CD4-positive, alpha-beta T cell (primary cell): ENCODE measurements at regions of chr17 and their contacts with region 1.

Region 1: DNA sequence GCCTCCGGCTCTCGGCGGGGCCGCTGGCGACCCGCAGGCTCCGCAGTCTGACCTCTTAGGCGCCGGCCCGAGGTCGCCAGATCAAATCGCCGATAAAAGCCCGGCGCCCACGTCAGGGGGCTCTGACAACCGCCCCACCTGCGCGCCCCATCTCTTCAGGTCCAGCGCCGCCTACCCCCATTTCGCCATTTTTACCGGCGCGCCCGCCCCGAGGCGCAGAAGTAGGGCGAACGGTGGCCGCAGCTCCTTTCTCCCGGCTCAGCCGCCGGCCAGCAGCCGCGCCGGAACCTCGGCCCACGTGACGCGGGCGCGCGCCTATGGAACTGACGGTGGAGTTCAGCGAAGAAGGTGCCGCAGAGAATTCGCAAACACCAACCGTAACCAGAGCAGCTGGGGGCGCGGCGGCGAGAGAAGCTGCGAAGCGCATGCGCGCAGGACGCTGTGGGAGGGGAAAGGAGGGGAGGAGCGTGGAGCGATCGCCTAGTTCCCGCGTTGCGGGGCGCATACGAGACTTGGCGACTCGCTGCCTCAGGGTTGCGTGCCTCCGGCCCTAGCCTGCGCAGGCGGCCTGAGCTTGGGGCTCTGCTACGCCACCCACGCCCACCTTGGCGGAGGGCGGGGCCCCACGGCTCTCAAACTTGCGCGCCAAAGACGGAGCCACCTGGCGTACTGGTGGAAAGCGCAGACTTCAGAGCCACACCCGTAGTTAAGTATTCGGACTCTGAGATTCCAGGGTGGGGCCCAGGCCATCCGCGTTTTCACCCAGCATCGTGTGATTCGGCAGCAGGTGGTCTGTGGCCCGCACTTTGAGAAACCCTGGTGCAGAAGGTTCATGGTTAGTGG is at the start of gene TRIM37:
- DNase-seq: peak; percentile 97 to 100 (median 98)
- ATAC-seq: peak; percentile 94
- H3K4me3 ChIP-seq: peak within 1 kb of the TSS; percentile 95
- H3K4me3 Mint-ChIP-seq: peak within 1 kb of the TSS; percentile 93
- H3K27ac ChIP-seq: peak within 1 kb of the TSS; percentile 91
- H3K27ac Mint-ChIP-seq: peak within 1 kb of the TSS; percentile 88
- H3K4me1 ChIP-seq: peaks cover 13% of the 10 kb centered on the region
- H3K4me1 Mint-ChIP-seq: peaks cover 41% of the 10 kb centered on the region
- H3K27me3 ChIP-seq: no peaks in the 10 kb centered on the region
- H3K27me3 Mint-ChIP-seq: no peaks in the 10 kb centered on the region
- CTCF ChIP-seq: no peak
- total RNA-seq, gene TRIM37: 16.8 to 18.0 TPM

Region 2: DNA sequence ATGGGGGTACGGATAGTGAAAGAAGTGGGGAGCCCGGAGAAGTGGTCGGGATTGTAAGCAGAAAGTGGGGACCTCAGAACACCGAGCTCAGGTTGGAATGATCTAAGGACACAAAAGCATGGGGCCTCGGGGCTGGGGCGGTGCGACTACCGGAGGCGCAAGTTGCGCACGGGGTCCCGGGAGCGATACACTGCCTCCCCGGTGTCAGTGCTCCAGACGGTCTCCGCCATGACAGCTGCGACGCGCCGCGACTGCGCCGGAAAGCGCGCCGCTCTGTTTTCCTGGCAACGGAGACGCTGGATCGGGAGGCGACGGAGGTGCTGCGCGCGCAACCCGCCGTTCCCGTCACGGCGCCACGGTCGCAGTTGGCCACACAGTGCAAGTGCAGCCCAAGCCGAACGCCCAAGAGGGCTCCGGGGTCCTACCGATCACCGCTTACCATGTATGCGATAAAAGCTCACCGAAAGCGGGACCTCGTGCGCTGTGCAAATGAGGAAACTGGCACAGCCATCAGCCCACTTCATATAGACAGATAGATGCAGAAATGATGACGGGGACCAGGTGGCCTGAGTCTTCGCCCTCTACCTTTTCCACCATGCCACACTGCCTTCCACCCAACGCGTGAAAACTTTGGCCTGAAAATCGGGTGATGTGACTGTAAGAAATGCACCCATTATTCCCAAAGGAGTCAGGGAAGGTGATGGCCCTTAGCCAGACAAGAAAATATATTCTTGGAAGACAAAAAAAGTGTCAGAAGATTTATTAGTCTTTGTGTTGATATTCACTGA is 887.5 kb before region 1 on chr17 and contains the start of gene MKS1:
- CTCF ChIA-PET with region 1: no interaction called
- POLR2A ChIA-PET with region 1: interaction called, 3 read pairs
- intact Hi-C with region 1: loop called in 1 of 2 experiments (anchors 5 kb)
- DNase-seq: peak; percentile 92 to 97 (median 95)
- ATAC-seq: peak; percentile 97
- H3K4me3 ChIP-seq: peak within 1 kb of the TSS; percentile 88
- H3K4me3 Mint-ChIP-seq: peak within 1 kb of the TSS; percentile 90
- H3K27ac ChIP-seq: peak within 1 kb of the TSS; percentile 62 to 79
- H3K27ac Mint-ChIP-seq: peak within 1 kb of the TSS; percentile 90
- H3K4me1 ChIP-seq: peaks cover 16% of the 10 kb centered on the region
- H3K4me1 Mint-ChIP-seq: peaks cover 25% of the 10 kb centered on the region
- H3K27me3 ChIP-seq: no peaks in the 10 kb centered on the region
- H3K27me3 Mint-ChIP-seq: no peaks in the 10 kb centered on the region
- CTCF ChIP-seq: peak; percentile 78
- total RNA-seq, gene MKS1: 4.6 to 6.4 TPM

Region 3: GRCh38 chr17:58631523-58632323 is 475.0 kb before region 1 on chr17:
- CTCF ChIA-PET with region 1: no interaction called
- POLR2A ChIA-PET with region 1: interaction called, 7 read pairs
- intact Hi-C with region 1: loop called in 1 of 2 experiments (anchors 5 kb)
- DNase-seq: peak; percentile 85 to 97 (median 90)
- ATAC-seq: peak; percentile 89
- H3K4me3 ChIP-seq: peak overlapping the region; percentile 54
- H3K4me3 Mint-ChIP-seq: no peak overlapping the region
- H3K27ac ChIP-seq: peak overlapping the region; percentile 66 to 94
- H3K27ac Mint-ChIP-seq: no peak overlapping the region
- H3K4me1 ChIP-seq: peaks cover 10% of the 10 kb centered on the region
- H3K4me1 Mint-ChIP-seq: no peaks in the 10 kb centered on the region
- H3K27me3 ChIP-seq: no peaks in the 10 kb centered on the region
- H3K27me3 Mint-ChIP-seq: no peaks in the 10 kb centered on the region
- CTCF ChIP-seq: no peak

Region 4: GRCh38 chr17:59004338-59005111 is 102.2 kb before region 1 on chr17:
- CTCF ChIA-PET with region 1: no interaction called
- POLR2A ChIA-PET with region 1: interaction called, 3 read pairs
- intact Hi-C with region 1: loop called in 1 of 2 experiments (anchors 5 kb)
- DNase-seq: peak; percentile 49 to 84 (median 66)
- ATAC-seq: peak; percentile 57
- H3K4me3 ChIP-seq: no peak overlapping the region
- H3K4me3 Mint-ChIP-seq: peak overlapping the region; percentile 45
- H3K27ac ChIP-seq: no peak overlapping the region
- H3K27ac Mint-ChIP-seq: peak overlapping the region; percentile 81
- H3K4me1 ChIP-seq: peaks cover 9% of the 10 kb centered on the region
- H3K4me1 Mint-ChIP-seq: peaks cover 12% of the 10 kb centered on the region
- H3K27me3 ChIP-seq: no peaks in the 10 kb centered on the region
- H3K27me3 Mint-ChIP-seq: no peaks in the 10 kb centered on the region
- CTCF ChIP-seq: peak; percentile 95

Region 5: DNA sequence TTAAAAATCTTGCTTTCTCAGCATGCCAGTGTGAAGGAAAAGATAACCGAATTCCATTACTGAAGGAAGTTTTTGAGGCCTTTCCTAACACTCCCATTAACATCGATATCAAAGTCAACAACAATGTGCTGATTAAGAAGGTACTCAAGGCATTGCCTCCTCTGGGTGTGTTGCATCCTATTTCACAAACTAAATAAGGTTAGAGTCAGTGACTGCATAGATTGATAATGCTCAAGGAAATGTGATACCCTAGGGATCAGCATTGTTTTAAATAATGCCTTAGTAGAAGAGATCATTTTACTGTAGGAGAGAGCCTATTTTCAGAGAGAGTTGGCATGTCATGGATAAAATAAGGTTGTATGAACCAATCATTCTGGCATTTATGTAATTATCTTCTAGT is 150.4 kb after region 1 on chr17:
- CTCF ChIA-PET with region 1: no interaction called
- POLR2A ChIA-PET with region 1: no interaction called
- intact Hi-C with region 1: no loop called
- DNase-seq: no peak
- ATAC-seq: no peak
- H3K4me3 ChIP-seq: no peak overlapping the region
- H3K4me3 Mint-ChIP-seq: no peak overlapping the region
- H3K27ac ChIP-seq: no peak overlapping the region
- H3K27ac Mint-ChIP-seq: no peak overlapping the region
- H3K4me1 ChIP-seq: no peaks in the 10 kb centered on the region
- H3K4me1 Mint-ChIP-seq: no peaks in the 10 kb centered on the region
- H3K27me3 ChIP-seq: no peaks in the 10 kb centered on the region
- H3K27me3 Mint-ChIP-seq: no peaks in the 10 kb centered on the region
- CTCF ChIP-seq: no peak

Region 6: GRCh38 chr17:59565171-59565969 is 458.7 kb after region 1 on chr17 and contains the start of gene DHX40:
- CTCF ChIA-PET with region 1: no interaction called
- POLR2A ChIA-PET with region 1: interaction called, 5 read pairs
- intact Hi-C with region 1: loop called in 1 of 2 experiments (anchors 5 kb)
- DNase-seq: peak; percentile 86 to 99 (median 92)
- ATAC-seq: peak; percentile 87
- H3K4me3 ChIP-seq: peak within 1 kb of the TSS; percentile 90
- H3K4me3 Mint-ChIP-seq: peak within 1 kb of the TSS; percentile 100
- H3K27ac ChIP-seq: peak within 1 kb of the TSS; percentile 86 to 91
- H3K27ac Mint-ChIP-seq: peak within 1 kb of the TSS; percentile 97
- H3K4me1 ChIP-seq: peaks cover 13% of the 10 kb centered on the region
- H3K4me1 Mint-ChIP-seq: peaks cover 26% of the 10 kb centered on the region
- H3K27me3 ChIP-seq: no peaks in the 10 kb centered on the region
- H3K27me3 Mint-ChIP-seq: no peaks in the 10 kb centered on the region
- CTCF ChIP-seq: no peak
- total RNA-seq, gene DHX40: 62.6 to 65.6 TPM

Region 7: GRCh38 chr17:59892924-59893676 is 786.4 kb after region 1 on chr17 and contains the starts of genes RPS6KB1 and TUBD1:
- CTCF ChIA-PET with region 1: no interaction called
- POLR2A ChIA-PET with region 1: interaction called, 3 read pairs
- intact Hi-C with region 1: loop called in 1 of 2 experiments (anchors 5 kb)
- DNase-seq: peak; percentile 94 to 100 (median 97)
- ATAC-seq: peak; percentile 91
- H3K4me3 ChIP-seq: peak within 1 kb of the TSS; percentile 79
- H3K4me3 Mint-ChIP-seq: peak within 1 kb of the TSS; percentile 98
- H3K27ac ChIP-seq: peak within 1 kb of the TSS; percentile 88 to 94
- H3K27ac Mint-ChIP-seq: peak within 1 kb of the TSS; percentile 94
- H3K4me1 ChIP-seq: peaks cover 44% of the 10 kb centered on the region
- H3K4me1 Mint-ChIP-seq: peaks cover 65% of the 10 kb centered on the region
- H3K27me3 ChIP-seq: no peaks in the 10 kb centered on the region
- H3K27me3 Mint-ChIP-seq: no peaks in the 10 kb centered on the region
- CTCF ChIP-seq: no peak
- total RNA-seq, gene RPS6KB1: 129 to 135 TPM
- total RNA-seq, gene TUBD1: 7.3 to 9.4 TPM

Region 8: GRCh38 chr17:60392042-60392844 is 1285.6 kb after region 1 on chr17 and contains the start of gene USP32:
- CTCF ChIA-PET with region 1: no interaction called
- POLR2A ChIA-PET with region 1: no interaction called
- intact Hi-C with region 1: loop called in 1 of 2 experiments (anchors 10 kb)
- DNase-seq: peak; percentile 94 to 99 (median 98)
- ATAC-seq: peak; percentile 87
- H3K4me3 ChIP-seq: peak within 1 kb of the TSS; percentile 97
- H3K4me3 Mint-ChIP-seq: peak within 1 kb of the TSS; percentile 98
- H3K27ac ChIP-seq: peak within 1 kb of the TSS; percentile 88 to 94
- H3K27ac Mint-ChIP-seq: peak within 1 kb of the TSS; percentile 91
- H3K4me1 ChIP-seq: peaks cover 28% of the 10 kb centered on the region
- H3K4me1 Mint-ChIP-seq: peaks cover 45% of the 10 kb centered on the region
- H3K27me3 ChIP-seq: no peaks in the 10 kb centered on the region
- H3K27me3 Mint-ChIP-seq: no peaks in the 10 kb centered on the region
- CTCF ChIP-seq: peak; percentile 50
- total RNA-seq, gene USP32: 23.9 to 24.7 TPM